B cell (primary cell): ENCODE measurements at regions of chr12 and their contacts with region 1.

Region 1: DNA sequence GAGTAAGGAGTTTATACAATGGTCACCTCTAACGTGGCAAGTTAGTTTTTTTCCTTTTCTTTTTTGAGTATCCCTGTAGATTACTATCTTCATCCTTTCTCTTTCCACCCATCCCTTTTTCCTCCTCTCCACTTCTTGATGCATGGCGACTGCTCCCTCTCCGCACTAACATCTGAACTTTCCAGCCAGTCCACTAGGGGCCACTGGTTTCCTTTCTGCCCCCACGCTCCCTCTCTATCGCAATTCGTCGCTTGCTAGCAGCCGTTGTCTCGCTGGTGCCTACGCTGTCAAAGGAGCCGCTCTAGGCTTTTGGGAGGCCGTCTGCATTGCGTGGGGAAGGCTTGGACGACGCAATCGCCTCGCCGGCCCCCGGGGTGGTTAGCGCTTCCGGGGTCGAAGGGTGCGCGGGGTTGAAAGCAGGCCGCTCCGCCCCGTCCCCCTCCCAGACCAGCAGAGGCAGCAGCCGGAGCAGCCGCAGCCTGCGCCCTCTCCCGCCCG is at the start of gene PCBP2:
- DNase-seq: peak; percentile 98
- ATAC-seq: peak; percentile 90
- H3K4me3 ChIP-seq: peak within 1 kb of the TSS; percentile 67 to 92 (median 85)
- H3K4me3 Mint-ChIP-seq: peak within 1 kb of the TSS; percentile 97
- H3K27ac ChIP-seq: peak within 1 kb of the TSS; percentile 90 to 94
- H3K27ac Mint-ChIP-seq: peak within 1 kb of the TSS; percentile 99
- H3K4me1 ChIP-seq: peaks cover 15 to 20% of the 10 kb centered on the region in 2 donors
- H3K4me1 Mint-ChIP-seq: peaks cover 27% of the 10 kb centered on the region
- H3K27me3 ChIP-seq: no peaks in the 10 kb centered on the region
- H3K27me3 Mint-ChIP-seq: no peaks in the 10 kb centered on the region
- CTCF ChIP-seq: peak; percentile 84
- total RNA-seq, gene PCBP2: 916 and 944 TPM in 2 replicates

Region 2: GRCh38 chr12:53295070-53295890 is 156.4 kb before region 1 on chr12 and contains the start of gene PFDN5:
- CTCF ChIA-PET with region 1: no interaction called
- POLR2A ChIA-PET with region 1: interaction called, 4 read pairs
- intact Hi-C with region 1: loop called (anchors 1 kb)
- DNase-seq: peak; percentile 92
- ATAC-seq: peak; percentile 90
- H3K4me3 ChIP-seq: peak within 1 kb of the TSS; percentile 64 to 96 (median 82)
- H3K4me3 Mint-ChIP-seq: peak within 1 kb of the TSS; percentile 100
- H3K27ac ChIP-seq: peak within 1 kb of the TSS; percentile 69 to 86
- H3K27ac Mint-ChIP-seq: peak within 1 kb of the TSS; percentile 99
- H3K4me1 ChIP-seq: peaks cover 26 to 39% of the 10 kb centered on the region in 2 donors
- H3K4me1 Mint-ChIP-seq: peaks cover 50% of the 10 kb centered on the region
- H3K27me3 ChIP-seq: no peaks in the 10 kb centered on the region
- H3K27me3 Mint-ChIP-seq: no peaks in the 10 kb centered on the region
- CTCF ChIP-seq: no peak
- total RNA-seq, gene PFDN5: 627 and 654 TPM in 2 replicates

Region 3: GRCh38 chr12:53379389-53380103 is 72.2 kb before region 1 on chr12:
- CTCF ChIA-PET with region 1: interaction called, 3 read pairs
- POLR2A ChIA-PET with region 1: no interaction called
- intact Hi-C with region 1: loop called (anchors 1 kb)
- DNase-seq: peak; percentile 99
- ATAC-seq: peak; percentile 70
- H3K4me3 ChIP-seq: peak overlapping the region; percentile 60 to 93 (median 64)
- H3K4me3 Mint-ChIP-seq: no peak overlapping the region
- H3K27ac ChIP-seq: peak overlapping the region; percentile 76 to 89
- H3K27ac Mint-ChIP-seq: no peak overlapping the region
- H3K4me1 ChIP-seq: peaks cover 39 to 46% of the 10 kb centered on the region in 2 donors
- H3K4me1 Mint-ChIP-seq: peaks cover 33% of the 10 kb centered on the region
- H3K27me3 ChIP-seq: no peaks in the 10 kb centered on the region
- H3K27me3 Mint-ChIP-seq: no peaks in the 10 kb centered on the region
- CTCF ChIP-seq: no peak

Region 4: DNA sequence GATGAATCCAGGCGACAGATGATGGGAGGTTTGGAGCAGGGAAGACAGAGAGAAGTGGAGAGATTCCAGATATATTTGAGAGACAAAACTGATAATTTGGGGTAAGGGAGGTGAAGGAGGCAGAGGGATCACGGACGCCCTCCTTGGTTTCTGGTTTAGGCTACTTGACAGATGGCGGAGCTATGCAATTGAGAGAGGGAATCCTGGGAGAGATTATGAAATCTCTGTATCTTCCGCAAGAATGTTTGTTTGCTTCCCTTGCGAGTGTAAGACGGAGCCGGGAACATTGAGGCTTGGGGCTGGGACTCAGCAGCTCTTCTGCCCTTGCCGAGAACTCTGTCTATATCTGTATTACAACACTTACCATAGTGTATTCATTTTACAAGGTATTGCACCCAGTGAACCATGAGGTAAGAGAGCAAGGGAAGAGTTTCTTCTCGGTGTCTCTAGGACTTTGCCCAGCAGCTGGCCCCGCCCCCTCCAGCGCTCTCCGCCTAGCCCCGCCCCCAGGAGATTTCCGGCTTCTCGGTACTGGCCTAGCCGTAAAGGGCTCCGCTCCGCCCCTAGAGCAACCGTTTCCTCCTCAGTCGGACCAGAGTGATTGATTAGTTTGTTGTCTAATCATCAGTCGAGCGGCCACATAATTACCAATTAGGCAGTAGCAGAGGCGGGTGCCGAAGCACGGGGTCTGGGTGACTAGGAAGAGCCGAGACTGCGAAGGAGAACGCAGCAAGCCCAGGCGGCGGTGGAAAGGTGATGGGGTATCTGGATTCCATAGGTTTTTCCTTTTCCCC is 10.5 kb before region 1 on chr12 and contains the start of gene PRR13:
- CTCF ChIA-PET with region 1: interaction called, 7 read pairs
- POLR2A ChIA-PET with region 1: interaction called, 8 read pairs
- intact Hi-C with region 1: loop called (anchors 1 kb)
- DNase-seq: peak; percentile 98
- ATAC-seq: peak; percentile 97
- H3K4me3 ChIP-seq: peak within 1 kb of the TSS; percentile 85 to 99 (median 94)
- H3K4me3 Mint-ChIP-seq: peak within 1 kb of the TSS; percentile 97
- H3K27ac ChIP-seq: peak within 1 kb of the TSS; percentile 62 to 93
- H3K27ac Mint-ChIP-seq: peak within 1 kb of the TSS; percentile 99
- H3K4me1 ChIP-seq: peaks cover 21 to 25% of the 10 kb centered on the region in 2 donors
- H3K4me1 Mint-ChIP-seq: peaks cover 40% of the 10 kb centered on the region
- H3K27me3 ChIP-seq: no peaks in the 10 kb centered on the region
- H3K27me3 Mint-ChIP-seq: no peaks in the 10 kb centered on the region
- CTCF ChIP-seq: no peak
- total RNA-seq, gene PRR13: 200 and 213 TPM in 2 replicates

Region 5: GRCh38 chr12:53508534-53509199 is 57.0 kb after region 1 on chr12:
- CTCF ChIA-PET with region 1: interaction called, 5 read pairs
- POLR2A ChIA-PET with region 1: interaction called, 5 read pairs
- intact Hi-C with region 1: loop called (anchors 2 kb)
- DNase-seq: peak; percentile 87
- ATAC-seq: peak; percentile 100
- H3K4me3 ChIP-seq: no peak overlapping the region
- H3K4me3 Mint-ChIP-seq: no peak overlapping the region
- H3K27ac ChIP-seq: peak overlapping the region; percentile 30 to 31
- H3K27ac Mint-ChIP-seq: peak overlapping the region; percentile 64
- H3K4me1 ChIP-seq: peaks cover 6 to 8% of the 10 kb centered on the region in 2 donors
- H3K4me1 Mint-ChIP-seq: peaks cover 10% of the 10 kb centered on the region
- H3K27me3 ChIP-seq: no peaks in the 10 kb centered on the region
- H3K27me3 Mint-ChIP-seq: no peaks in the 10 kb centered on the region
- CTCF ChIP-seq: peak; percentile 95

Region 6: DNA sequence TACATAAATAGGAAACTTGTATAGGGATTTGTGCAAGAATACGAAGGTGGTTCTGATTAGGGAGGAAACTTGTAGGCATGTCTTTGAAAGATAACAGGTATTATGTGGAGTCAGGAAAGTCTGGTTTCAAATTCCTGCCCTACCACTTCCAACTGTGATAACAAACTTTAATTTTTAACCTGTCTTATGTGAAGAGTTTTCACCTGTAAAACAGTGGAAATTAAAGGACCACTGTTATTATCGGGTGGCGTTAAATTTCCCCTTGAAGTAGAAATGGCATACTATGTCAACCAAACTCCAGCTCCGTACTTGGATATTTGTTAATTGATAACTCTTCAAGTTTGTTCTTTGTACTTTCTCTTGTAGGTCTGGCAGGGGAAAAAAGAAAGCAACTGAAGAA is 1868.5 kb after region 1 on chr12:
- CTCF ChIA-PET with region 1: no interaction called
- POLR2A ChIA-PET with region 1: no interaction called
- intact Hi-C with region 1: no loop called
- DNase-seq: no peak
- ATAC-seq: no peak
- H3K4me3 ChIP-seq: no peak overlapping the region
- H3K4me3 Mint-ChIP-seq: no peak overlapping the region
- H3K27ac ChIP-seq: no peak overlapping the region
- H3K27ac Mint-ChIP-seq: no peak overlapping the region
- H3K4me1 ChIP-seq: no peaks in the 10 kb centered on the region
- H3K4me1 Mint-ChIP-seq: no peaks in the 10 kb centered on the region
- H3K27me3 ChIP-seq: peaks cover 0 to 3% (median 0%) of the 10 kb centered on the region in 4 experiments
- H3K27me3 Mint-ChIP-seq: peaks cover 23% of the 10 kb centered on the region
- CTCF ChIP-seq: no peak